ENCODE measurements at regions of chr16 and their contacts with region 1.

Region 1: DNA sequence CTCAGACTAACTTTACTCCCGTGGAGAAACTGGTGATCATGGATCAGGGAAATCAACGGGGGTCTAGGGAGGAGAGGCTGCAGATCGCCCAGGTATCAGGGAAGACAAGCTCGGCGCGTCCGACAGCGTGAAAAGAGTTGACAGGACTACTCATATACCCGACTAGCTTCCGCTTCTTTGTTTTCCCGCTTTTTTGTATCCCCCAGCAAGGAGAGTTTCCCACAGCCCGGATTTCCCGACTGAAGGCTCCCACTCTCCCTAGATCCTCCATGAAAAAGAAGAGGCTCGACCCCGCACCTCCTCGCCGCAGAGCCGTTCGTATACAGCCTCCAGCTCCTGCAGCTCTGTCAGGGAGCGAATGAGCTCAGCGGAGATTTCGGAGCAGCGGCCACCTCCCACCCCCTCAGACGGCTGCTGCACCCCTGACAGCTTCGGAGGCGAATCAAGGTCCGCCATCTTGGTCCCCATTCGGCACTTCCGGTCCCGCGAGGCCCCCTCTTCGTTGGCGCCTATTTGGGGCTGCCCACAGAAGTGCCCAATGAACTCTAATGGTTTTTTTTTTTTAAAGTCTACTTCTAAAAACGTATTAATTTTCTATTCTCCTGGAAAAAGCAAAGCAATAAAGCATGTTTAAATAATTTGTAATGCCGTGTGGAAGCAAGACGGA is at the start of gene COG4:
- DNase-seq: peak; percentile 87
- H3K4me3 Mint-ChIP-seq: peak within 1 kb of the TSS; percentile 95
- H3K27ac Mint-ChIP-seq: peak within 1 kb of the TSS; percentile 97
- H3K4me1 Mint-ChIP-seq: peaks cover 49% of the 10 kb centered on the region
- H3K27me3 Mint-ChIP-seq: no peaks in the 10 kb centered on the region
- total RNA-seq, gene COG4: 42.5 and 44.1 TPM in 2 replicates

Region 2: DNA sequence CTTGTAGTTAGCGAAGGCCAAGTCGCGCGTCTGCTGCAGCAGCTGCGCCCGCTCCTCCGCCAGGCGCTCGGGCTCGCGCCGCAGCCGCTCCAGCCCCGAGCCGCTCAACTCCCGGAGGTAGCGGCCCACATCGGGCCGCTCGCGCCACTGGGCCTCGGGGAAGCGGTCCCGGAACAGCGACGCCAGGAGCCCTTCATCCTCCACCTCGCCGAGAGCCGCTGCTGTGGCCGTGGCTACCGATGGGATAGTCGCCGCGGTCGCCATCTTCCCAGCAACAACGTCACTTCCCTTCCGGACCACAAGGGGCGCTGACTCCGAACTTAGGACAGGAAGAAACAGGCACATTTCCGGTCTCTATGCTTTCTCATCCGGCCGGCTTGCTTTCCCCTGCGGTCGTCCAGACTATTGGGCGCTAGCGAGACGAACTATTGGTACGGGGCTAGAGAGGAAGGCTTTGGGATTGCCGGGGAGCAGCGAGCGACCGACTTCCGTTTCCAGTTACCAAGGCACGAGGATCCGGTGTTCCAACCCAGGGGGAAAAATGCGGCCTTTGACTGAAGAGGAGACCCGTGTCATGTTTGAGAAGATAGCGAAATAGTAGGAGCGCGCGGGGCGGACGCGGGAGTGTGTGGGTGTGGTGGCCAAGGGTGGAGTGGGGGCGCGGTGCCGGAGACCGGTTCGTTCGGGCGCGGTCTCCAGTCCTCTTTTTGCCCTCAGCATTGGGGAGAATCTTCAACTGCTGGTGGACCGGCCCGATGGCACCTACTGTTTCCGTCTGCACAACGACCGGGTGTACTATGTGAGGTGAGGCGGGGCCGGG is 1183.7 kb before region 1 on chr16 and contains the starts of genes COG8 and NIP7:
- intact Hi-C with region 1: loop called (anchors 10 kb)
- DNase-seq: peak; percentile 91
- H3K4me3 Mint-ChIP-seq: peak within 1 kb of the TSS; percentile 99
- H3K27ac Mint-ChIP-seq: peak within 1 kb of the TSS; percentile 99
- H3K4me1 Mint-ChIP-seq: peaks cover 43% of the 10 kb centered on the region
- H3K27me3 Mint-ChIP-seq: no peaks in the 10 kb centered on the region
- total RNA-seq, gene COG8: 45.3 and 46.5 TPM in 2 replicates
- total RNA-seq, gene NIP7: 80.7 and 85.8 TPM in 2 replicates

Region 3: GRCh38 chr16:70289229-70290098 is 233.7 kb before region 1 on chr16 and contains the start of gene AARS1:
- intact Hi-C with region 1: loop called (anchors 2 kb)
- DNase-seq: peak; percentile 95
- H3K4me3 Mint-ChIP-seq: peak within 1 kb of the TSS; percentile 96
- H3K27ac Mint-ChIP-seq: peak within 1 kb of the TSS; percentile 99
- H3K4me1 Mint-ChIP-seq: peaks cover 23% of the 10 kb centered on the region
- H3K27me3 Mint-ChIP-seq: no peaks in the 10 kb centered on the region
- total RNA-seq, gene AARS1: 109 and 111 TPM in 2 replicates

Region 4: DNA sequence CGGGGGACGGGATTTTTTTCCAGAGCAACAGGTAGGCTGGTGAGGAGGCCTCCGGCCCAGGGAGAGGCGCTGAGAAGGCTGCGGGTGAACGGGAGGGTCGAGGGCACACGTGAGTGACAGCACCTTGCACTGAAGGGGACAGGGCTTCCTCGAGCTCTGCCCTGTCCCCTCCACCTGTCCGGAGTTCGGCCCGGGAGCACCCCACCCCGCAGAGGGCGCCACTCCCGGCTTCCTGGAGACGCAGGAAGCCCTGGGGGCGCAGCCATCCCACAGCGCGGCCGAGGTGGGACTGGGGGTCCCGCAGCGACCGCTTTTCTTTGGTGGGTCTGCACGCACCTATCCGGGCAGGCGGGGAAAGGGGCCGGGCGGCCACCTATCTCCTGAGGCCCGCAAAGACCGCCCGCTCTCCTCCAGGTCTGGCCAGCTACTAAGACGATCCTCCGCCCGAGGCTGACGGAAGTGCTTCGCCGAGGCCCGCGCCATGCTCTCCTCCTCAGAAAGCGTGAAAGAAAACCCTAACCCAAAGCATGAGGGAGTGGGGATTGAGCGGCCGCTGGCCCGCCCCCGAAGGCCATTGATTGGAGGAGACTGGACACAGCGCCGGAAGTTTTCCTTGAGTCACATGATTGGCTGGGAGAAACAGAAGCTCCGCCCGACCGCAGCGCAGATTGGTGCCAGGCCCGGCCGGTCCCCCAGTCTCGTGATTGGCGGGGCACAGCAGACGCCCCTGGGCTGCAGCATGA is 142.2 kb before region 1 on chr16:
- intact Hi-C with region 1: loop called (anchors 1 kb)
- DNase-seq: peak; percentile 96
- H3K4me3 Mint-ChIP-seq: peak overlapping the region; percentile 99
- H3K27ac Mint-ChIP-seq: peak overlapping the region; percentile 99
- H3K4me1 Mint-ChIP-seq: peaks cover 5% of the 10 kb centered on the region
- H3K27me3 Mint-ChIP-seq: no peaks in the 10 kb centered on the region

Region 5: GRCh38 chr16:70428178-70428998 is 94.8 kb before region 1 on chr16:
- intact Hi-C with region 1: loop called (anchors 2 kb)
- DNase-seq: peak; percentile 57
- H3K4me3 Mint-ChIP-seq: peak overlapping the region; percentile 46
- H3K27ac Mint-ChIP-seq: peak overlapping the region; percentile 86
- H3K4me1 Mint-ChIP-seq: peaks cover 51% of the 10 kb centered on the region
- H3K27me3 Mint-ChIP-seq: no peaks in the 10 kb centered on the region

Region 6: DNA sequence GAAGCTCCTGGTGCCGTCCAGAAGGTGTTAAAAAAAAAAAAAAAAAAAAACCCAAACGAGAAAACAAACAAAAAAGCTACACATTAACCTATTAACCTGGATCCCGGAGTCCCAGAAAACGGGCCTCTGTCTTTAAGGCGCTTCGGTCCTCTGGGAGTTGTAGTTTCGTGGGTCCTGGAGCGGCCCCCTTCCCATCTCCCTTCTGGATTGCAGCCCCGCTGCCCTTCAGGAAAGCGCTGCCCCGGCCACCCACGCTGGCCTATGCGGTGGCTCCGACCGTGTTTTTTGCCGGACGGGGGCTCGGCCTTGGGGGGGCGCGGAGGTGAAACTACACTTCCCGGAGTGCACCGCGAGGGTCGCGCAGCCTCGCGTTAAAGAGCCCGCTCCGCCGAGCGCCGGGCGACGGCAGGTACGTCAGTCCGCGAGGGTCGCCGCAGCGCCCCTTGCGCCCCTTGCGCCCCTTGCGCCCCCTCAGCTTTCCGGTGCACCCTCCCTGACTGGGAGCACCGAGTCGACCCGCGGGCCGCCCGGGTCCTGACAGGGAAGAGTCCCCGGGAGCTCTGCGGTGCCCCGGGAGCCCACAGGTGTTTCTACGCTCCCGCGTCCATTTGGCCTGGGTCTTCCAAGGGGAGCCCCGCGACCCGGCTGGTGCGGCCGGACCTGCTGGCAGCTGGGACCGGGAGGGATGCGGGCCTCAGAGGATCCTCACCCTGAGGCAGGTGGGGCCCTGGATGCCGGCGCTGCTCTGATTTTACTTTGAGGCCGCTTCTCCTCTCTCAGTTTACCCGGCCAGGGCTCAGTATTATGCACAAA is 68.8 kb before region 1 on chr16 and contains the start of gene FCSK:
- intact Hi-C with region 1: loop called (anchors 1 kb)
- DNase-seq: peak; percentile 52
- H3K4me3 Mint-ChIP-seq: peak within 1 kb of the TSS; percentile 91
- H3K27ac Mint-ChIP-seq: peak within 1 kb of the TSS; percentile 83
- H3K4me1 Mint-ChIP-seq: peaks cover 21% of the 10 kb centered on the region
- H3K27me3 Mint-ChIP-seq: no peaks in the 10 kb centered on the region
- total RNA-seq, gene FCSK: 19.7 and 21.0 TPM in 2 replicates

Region 7: GRCh38 chr16:70490261-70490803 is 32.9 kb before region 1 on chr16:
- intact Hi-C with region 1: no loop called
- DNase-seq: no peak
- H3K4me3 Mint-ChIP-seq: no peak overlapping the region
- H3K27ac Mint-ChIP-seq: no peak overlapping the region
- H3K4me1 Mint-ChIP-seq: peaks cover 17% of the 10 kb centered on the region
- H3K27me3 Mint-ChIP-seq: no peaks in the 10 kb centered on the region

Measured in activated T-helper 1 cell treated with anti-CD3 and anti-CD28 coated beads, Interleukin-12 subunit alpha, Interleukin-12 subunit beta, Interleukin-2, Interleukin-4 antibody, amounts not matched to agents 30 ng/mL and 10 ng/mL and 1 ng/mL, durations not matched to agents 14 hours and 24 hours and 36 hours (primary cell).